Activated CD4-positive, alpha-beta T cell treated with anti-CD3 and anti-CD28 coated beads, Interleukin-2, amount 10 ng/mL, durations not matched to agents 7 days and 5 days (primary cell): ENCODE measurements at regions of chr10 and their contacts with region 1.

Region 1: GRCh38 chr10:95430231-95430951 is 130.8 kb downstream of the SORBS1 start:
- DNase-seq: peak; percentile 58
- H3K4me3 Mint-ChIP-seq: no peak overlapping the region
- H3K27ac Mint-ChIP-seq: no peak overlapping the region
- H3K4me1 Mint-ChIP-seq: no peaks in the 10 kb centered on the region
- H3K27me3 Mint-ChIP-seq: peaks cover 2% of the 10 kb centered on the region

Region 2: DNA sequence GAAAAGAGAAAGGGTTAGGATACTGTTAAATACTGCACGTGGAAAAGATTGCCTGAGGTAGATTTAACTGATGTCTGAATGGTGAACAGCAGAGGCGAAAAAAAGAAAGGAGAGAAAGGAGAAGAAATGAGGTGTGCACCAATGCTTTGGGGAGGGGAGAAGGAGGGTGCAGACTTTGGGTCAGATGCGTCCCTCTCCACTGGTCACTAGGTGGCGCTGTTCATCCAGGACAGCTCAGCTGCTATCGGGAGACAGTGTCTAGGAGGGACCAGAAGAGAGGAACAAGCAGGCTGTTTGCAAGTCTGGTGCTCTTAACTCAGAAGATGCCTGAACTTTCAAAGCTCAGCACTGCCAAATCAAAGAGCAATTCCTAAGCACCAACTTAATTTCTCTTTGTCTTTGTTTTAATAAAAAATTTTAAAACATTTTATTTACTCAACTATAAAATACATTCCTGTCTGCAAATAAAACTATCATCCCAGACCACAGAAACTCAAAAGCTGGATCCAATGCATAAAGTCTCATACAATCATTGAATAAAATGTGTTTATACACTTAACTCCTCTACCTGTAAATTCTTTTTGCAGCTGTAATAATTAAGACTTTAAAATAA is 55.7 kb before region 1 on chr10:
- CTCF ChIA-PET with region 1: interaction called, 10 read pairs
- POLR2A ChIA-PET with region 1: no interaction called
- DNase-seq: peak; percentile 84
- H3K4me3 Mint-ChIP-seq: no peak overlapping the region
- H3K27ac Mint-ChIP-seq: no peak overlapping the region
- H3K4me1 Mint-ChIP-seq: peaks cover 5% of the 10 kb centered on the region
- H3K27me3 Mint-ChIP-seq: peaks cover 27% of the 10 kb centered on the region

Region 3: GRCh38 chr10:95605163-95605562 is 174.8 kb after region 1 on chr10:
- CTCF ChIA-PET with region 1: interaction called, 14 read pairs
- POLR2A ChIA-PET with region 1: no interaction called
- DNase-seq: no peak
- H3K4me3 Mint-ChIP-seq: no peak overlapping the region
- H3K27ac Mint-ChIP-seq: no peak overlapping the region
- H3K4me1 Mint-ChIP-seq: no peaks in the 10 kb centered on the region
- H3K27me3 Mint-ChIP-seq: no peaks in the 10 kb centered on the region